ENCODE measurements at regions of chr11 and their contacts with region 1.

Region 1: GRCh38 chr11:119067371-119068222 is at the start of gene VPS11:
- DNase-seq: peak; percentile 95 to 97
- ATAC-seq: peak; percentile 95 to 96
- H3K4me3 ChIP-seq: peak within 1 kb of the TSS; percentile 84 to 97 (median 91)
- H3K27ac ChIP-seq: peak within 1 kb of the TSS; percentile 85 to 91 (median 90)
- H3K4me1 ChIP-seq: peaks cover 25 to 26% of the 10 kb centered on the region in 2 donors
- H3K27me3 ChIP-seq: no peaks in the 10 kb centered on the region
- CTCF ChIP-seq: peak in 1 of 5 experiments; percentile 26
- POLR2A ChIP-seq: peak; percentile 70 to 71
- total RNA-seq, gene VPS11: 16.5 to 25.9 (median 20.3) TPM

Region 2: GRCh38 chr11:119057000-119057769 is 10.4 kb before region 1 on chr11 and contains the start of gene HYOU1:
- in situ Hi-C with region 1: no loop called
- intact Hi-C with region 1: loop called (anchors 1 kb)
- DNase-seq: peak; percentile 97
- ATAC-seq: peak; percentile 92 to 93
- H3K4me3 ChIP-seq: peak within 1 kb of the TSS; percentile 73 to 92 (median 80)
- H3K27ac ChIP-seq: peak within 1 kb of the TSS; percentile 83 to 95 (median 88)
- H3K4me1 ChIP-seq: peaks cover 13 to 16% of the 10 kb centered on the region in 2 donors
- H3K27me3 ChIP-seq: no peaks in the 10 kb centered on the region
- CTCF ChIP-seq: peak in 2 of 5 experiments; percentile 19 to 36
- POLR2A ChIP-seq: peak; percentile 94 to 95
- total RNA-seq, gene HYOU1: 18.4 to 29.2 (median 21.9) TPM

Region 3: GRCh38 chr11:119084663-119085436 is 17.3 kb after region 1 on chr11 and contains the start of gene HMBS:
- in situ Hi-C with region 1: no loop called
- intact Hi-C with region 1: loop called (anchors 1 kb)
- DNase-seq: peak; percentile 87 to 92
- ATAC-seq: peak; percentile 98
- H3K4me3 ChIP-seq: peak within 1 kb of the TSS; percentile 77 to 99 (median 80)
- H3K27ac ChIP-seq: peak within 1 kb of the TSS; percentile 88 to 98 (median 94)
- H3K4me1 ChIP-seq: peaks cover 15 to 17% of the 10 kb centered on the region in 2 donors
- H3K27me3 ChIP-seq: no peaks in the 10 kb centered on the region
- CTCF ChIP-seq: no peak
- POLR2A ChIP-seq: peak; percentile 20 to 49
- total RNA-seq, gene HMBS: 8.7 to 31.1 (median 14.5) TPM

Region 4: GRCh38 chr11:119095066-119095880 is 27.7 kb after region 1 on chr11:
- in situ Hi-C with region 1: no loop called
- intact Hi-C with region 1: loop called (anchors 1 kb)
- DNase-seq: peak; percentile 99 to 100
- ATAC-seq: peak; percentile 94
- H3K4me3 ChIP-seq: peak overlapping the region; percentile 69 to 99 (median 88)
- H3K27ac ChIP-seq: peak overlapping the region; percentile 91 to 98 (median 94)
- H3K4me1 ChIP-seq: peaks cover 17 to 24% of the 10 kb centered on the region in 2 donors
- H3K27me3 ChIP-seq: no peaks in the 10 kb centered on the region
- CTCF ChIP-seq: peak in 4 of 5 experiments; percentile 18 to 70 (median 35)
- POLR2A ChIP-seq: peak; percentile 99 to 100

Region 5: GRCh38 chr11:119101759-119102423 is 34.3 kb after region 1 on chr11 and contains the start of gene DPAGT1:
- in situ Hi-C with region 1: no loop called
- intact Hi-C with region 1: loop called (anchors 2 kb)
- DNase-seq: peak; percentile 90 to 91
- ATAC-seq: peak; percentile 97 to 98
- H3K4me3 ChIP-seq: peak within 1 kb of the TSS; percentile 74 to 90 (median 79)
- H3K27ac ChIP-seq: peak within 1 kb of the TSS; percentile 88 to 93 (median 90)
- H3K4me1 ChIP-seq: peaks cover 24 to 31% of the 10 kb centered on the region in 2 donors
- H3K27me3 ChIP-seq: no peaks in the 10 kb centered on the region
- CTCF ChIP-seq: peak in 1 of 5 experiments; percentile 29
- POLR2A ChIP-seq: peak; percentile 19 to 43
- total RNA-seq, gene DPAGT1: 8.9 to 34.0 (median 15.1) TPM